ENCODE measurements at regions of chr16 and their contacts with region 1.

Region 1: GRCh38 chr16:10944249-10945064 is at the start of gene CLEC16A:
- DNase-seq: peak; percentile 94
- ATAC-seq: peak; percentile 74
- H3K4me3 ChIP-seq: peak within 1 kb of the TSS; percentile 91
- H3K27ac ChIP-seq: no peak within 1 kb of the TSS
- H3K4me1 ChIP-seq: peaks cover 24% of the 10 kb centered on the region
- H3K27me3 ChIP-seq: no peaks in the 10 kb centered on the region
- CTCF ChIP-seq: no peak
- total RNA-seq, gene CLEC16A: 9.5 and 14.6 TPM in 2 replicates

Region 2: GRCh38 chr16:10743610-10744393 is 200.7 kb before region 1 on chr16 and contains the start of gene NUBP1:
- CTCF ChIA-PET with region 1: no interaction called
- POLR2A ChIA-PET with region 1: interaction called, 5 read pairs
- intact Hi-C with region 1: loop called (anchors 5 kb)
- DNase-seq: peak; percentile 94
- ATAC-seq: peak; percentile 93
- H3K4me3 ChIP-seq: peak within 1 kb of the TSS; percentile 80
- H3K27ac ChIP-seq: peak within 1 kb of the TSS; percentile 91
- H3K4me1 ChIP-seq: peaks cover 9% of the 10 kb centered on the region
- H3K27me3 ChIP-seq: no peaks in the 10 kb centered on the region
- CTCF ChIP-seq: no peak
- total RNA-seq, gene NUBP1: 34.3 and 49.3 TPM in 2 replicates

Region 3: GRCh38 chr16:10906914-10907756 is 37.3 kb before region 1 on chr16:
- CTCF ChIA-PET with region 1: no interaction called
- POLR2A ChIA-PET with region 1: no interaction called
- intact Hi-C with region 1: no loop called
- DNase-seq: no peak
- ATAC-seq: no peak
- H3K4me3 ChIP-seq: no peak overlapping the region
- H3K27ac ChIP-seq: no peak overlapping the region
- H3K4me1 ChIP-seq: no peaks in the 10 kb centered on the region
- H3K27me3 ChIP-seq: no peaks in the 10 kb centered on the region
- CTCF ChIP-seq: no peak

Region 4: DNA sequence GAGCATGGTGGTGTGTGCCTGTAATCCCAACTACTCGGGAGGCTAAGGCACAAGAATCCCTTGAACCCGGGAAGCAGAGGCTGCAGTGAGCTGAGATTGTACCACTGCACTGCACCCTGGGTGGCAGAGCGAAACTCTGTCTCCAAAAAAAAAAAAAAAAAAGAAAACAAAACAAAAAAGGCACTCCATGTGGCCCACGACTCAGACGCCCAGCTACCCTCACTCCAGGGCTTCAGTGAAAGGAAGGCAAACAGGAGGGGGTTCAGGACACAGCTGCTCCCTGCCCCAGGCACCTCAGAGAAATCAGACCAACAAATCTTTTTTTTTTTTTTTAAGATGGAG is 550.6 kb after region 1 on chr16:
- CTCF ChIA-PET with region 1: no interaction called
- POLR2A ChIA-PET with region 1: interaction called, 25 read pairs
- intact Hi-C with region 1: no loop called
- DNase-seq: no peak
- ATAC-seq: no peak
- H3K4me3 ChIP-seq: no peak overlapping the region
- H3K27ac ChIP-seq: no peak overlapping the region
- H3K4me1 ChIP-seq: peaks cover 17% of the 10 kb centered on the region
- H3K27me3 ChIP-seq: no peaks in the 10 kb centered on the region
- CTCF ChIP-seq: no peak